ENCODE measurements at regions of chr14 and their contacts with region 1.

Region 1: GRCh38 chr14:37142835-37143401 is 29.5 kb downstream of the SLC25A21 start:
- DNase-seq: peak; percentile 90
- ATAC-seq: peak; percentile 97
- H3K4me3 ChIP-seq: peak overlapping the region; percentile 22
- H3K27ac ChIP-seq: peak overlapping the region; percentile 71
- H3K4me1 ChIP-seq: peaks cover 37% of the 10 kb centered on the region
- H3K27me3 ChIP-seq: no peaks in the 10 kb centered on the region
- CTCF ChIP-seq: no peak

Region 2: DNA sequence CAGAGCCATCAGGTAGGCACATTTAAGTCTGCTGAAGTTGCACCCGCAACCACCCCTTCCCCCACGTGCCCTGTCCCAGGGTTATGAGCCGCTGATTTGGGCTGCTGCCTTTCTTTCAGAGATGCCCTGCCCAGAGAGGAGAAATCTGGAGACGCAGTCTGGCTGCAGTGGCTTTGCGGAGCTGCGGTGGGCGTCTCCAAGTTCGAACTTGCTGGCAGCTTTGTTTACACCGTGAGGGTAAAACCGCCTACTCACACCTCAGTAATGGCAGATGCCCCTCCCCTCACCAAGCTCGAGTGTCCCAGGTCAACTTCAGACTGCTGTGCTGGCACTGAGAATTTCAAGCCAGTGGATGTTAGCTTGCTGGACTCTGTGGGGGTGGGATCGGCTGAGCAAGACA is 981.1 kb before region 1 on chr14:
- CTCF ChIA-PET with region 1: no interaction called
- POLR2A ChIA-PET with region 1: no interaction called
- intact Hi-C with region 1: no loop called
- DNase-seq: no peak
- ATAC-seq: no peak
- H3K4me3 ChIP-seq: no peak overlapping the region
- H3K27ac ChIP-seq: no peak overlapping the region
- H3K4me1 ChIP-seq: no peaks in the 10 kb centered on the region
- H3K27me3 ChIP-seq: peaks cover 60% of the 10 kb centered on the region
- CTCF ChIP-seq: no peak

Region 3: DNA sequence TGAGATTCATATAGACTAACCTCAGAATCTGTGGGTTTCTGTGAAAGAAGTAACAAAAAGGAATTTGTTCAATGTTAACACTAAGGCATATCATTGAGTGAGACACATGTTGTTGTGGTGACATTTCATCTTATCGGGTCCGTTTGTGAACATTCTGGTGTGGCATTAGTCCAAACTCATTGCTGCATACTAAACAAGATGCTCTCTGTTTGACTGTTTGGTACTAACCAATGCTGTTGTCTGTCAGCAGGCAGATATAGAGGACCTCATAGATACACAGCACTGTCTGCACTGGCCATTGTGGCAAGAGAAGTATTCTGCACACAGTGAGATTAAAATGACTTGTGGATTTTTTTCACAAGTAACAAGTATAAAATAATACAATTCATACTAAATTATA is 11.7 kb before region 1 on chr14:
- CTCF ChIA-PET with region 1: no interaction called
- POLR2A ChIA-PET with region 1: interaction called, 10 read pairs
- intact Hi-C with region 1: no loop called
- DNase-seq: no peak
- ATAC-seq: no peak
- H3K4me3 ChIP-seq: no peak overlapping the region
- H3K27ac ChIP-seq: no peak overlapping the region
- H3K4me1 ChIP-seq: peaks cover 9% of the 10 kb centered on the region
- H3K27me3 ChIP-seq: no peaks in the 10 kb centered on the region
- CTCF ChIP-seq: no peak

Region 4: DNA sequence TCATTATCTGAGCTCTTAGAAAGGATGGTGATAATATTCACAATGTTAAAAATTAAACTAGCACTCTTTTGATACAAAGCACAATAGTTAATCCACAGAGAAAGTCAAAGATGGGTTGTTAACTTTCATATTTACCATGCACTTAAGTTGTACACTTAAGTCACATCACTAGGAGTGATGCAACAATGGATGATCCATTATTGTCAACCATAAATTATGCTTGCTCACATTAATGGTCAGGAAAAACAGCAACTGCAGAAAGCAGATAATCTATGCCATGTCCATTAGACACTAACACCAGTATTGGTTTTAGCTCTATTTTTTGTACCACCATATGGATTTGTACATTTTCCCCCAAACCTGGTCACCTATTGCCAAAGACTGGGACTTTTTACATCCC is 256.6 kb after region 1 on chr14:
- CTCF ChIA-PET with region 1: no interaction called
- POLR2A ChIA-PET with region 1: no interaction called
- intact Hi-C with region 1: no loop called
- DNase-seq: no peak
- ATAC-seq: no peak
- H3K4me3 ChIP-seq: no peak overlapping the region
- H3K27ac ChIP-seq: no peak overlapping the region
- H3K4me1 ChIP-seq: no peaks in the 10 kb centered on the region
- H3K27me3 ChIP-seq: no peaks in the 10 kb centered on the region
- CTCF ChIP-seq: no peak